Right ventricle myocardium inferior (tissue), 1 donor: ENCODE measurements at regions of chr19 and their contacts with region 1.

Region 1: DNA sequence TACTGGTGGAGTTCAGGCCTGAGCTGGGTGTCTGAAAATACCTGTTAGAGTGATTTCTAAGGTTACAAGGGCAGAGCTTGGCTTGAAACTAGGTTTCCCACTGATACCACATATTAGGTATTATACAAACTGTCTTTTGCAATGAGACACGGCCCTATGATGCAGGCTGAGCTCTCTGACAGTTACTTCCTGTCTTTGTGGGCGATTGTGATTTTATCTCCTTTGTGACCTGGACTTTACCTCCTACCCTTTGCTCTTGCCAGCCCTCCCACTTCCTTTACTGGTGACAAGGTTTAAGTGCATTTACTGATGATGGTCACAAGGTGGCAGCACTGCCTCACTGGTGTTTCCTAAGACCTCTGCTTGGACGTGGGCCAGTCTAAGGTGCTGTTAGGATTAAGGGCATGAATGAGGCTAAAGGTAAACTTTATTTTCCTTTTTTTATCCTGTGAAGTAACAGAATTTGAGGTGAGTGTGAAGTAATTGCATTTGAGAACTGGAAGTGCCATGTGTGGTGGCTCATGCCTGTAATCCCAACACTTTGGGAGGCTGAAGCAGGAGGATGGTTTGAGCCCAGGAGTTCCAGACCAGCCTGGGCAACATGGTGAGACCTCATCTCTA is 7.7 kb upstream of the CXCL17 start:
- DNase-seq: peak; percentile 85
- ATAC-seq: peak; percentile 73

Region 2: DNA sequence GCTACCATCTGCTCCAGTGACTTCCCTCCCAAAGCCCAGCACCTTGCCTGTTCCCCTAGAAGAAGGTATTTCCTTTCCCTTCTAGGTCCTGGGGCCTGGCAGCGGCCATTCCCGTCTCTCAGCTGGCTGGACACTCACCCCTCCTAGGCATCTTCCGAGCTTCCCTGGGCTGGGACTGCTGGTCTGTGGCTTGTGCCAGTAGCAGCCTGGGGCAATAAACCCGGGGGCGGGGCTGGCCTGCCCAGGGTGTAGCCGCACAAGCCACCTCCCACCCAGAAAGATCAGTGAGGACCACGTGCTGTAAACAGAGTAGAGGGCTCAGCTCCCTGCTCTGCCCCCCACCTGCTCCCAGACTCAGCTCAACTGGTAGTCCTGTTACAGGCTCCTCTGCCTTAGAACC is 38.2 kb before region 1 on chr19:
- intact Hi-C with region 1: no loop called
- DNase-seq: no peak
- ATAC-seq: peak; percentile 18

Region 3: DNA sequence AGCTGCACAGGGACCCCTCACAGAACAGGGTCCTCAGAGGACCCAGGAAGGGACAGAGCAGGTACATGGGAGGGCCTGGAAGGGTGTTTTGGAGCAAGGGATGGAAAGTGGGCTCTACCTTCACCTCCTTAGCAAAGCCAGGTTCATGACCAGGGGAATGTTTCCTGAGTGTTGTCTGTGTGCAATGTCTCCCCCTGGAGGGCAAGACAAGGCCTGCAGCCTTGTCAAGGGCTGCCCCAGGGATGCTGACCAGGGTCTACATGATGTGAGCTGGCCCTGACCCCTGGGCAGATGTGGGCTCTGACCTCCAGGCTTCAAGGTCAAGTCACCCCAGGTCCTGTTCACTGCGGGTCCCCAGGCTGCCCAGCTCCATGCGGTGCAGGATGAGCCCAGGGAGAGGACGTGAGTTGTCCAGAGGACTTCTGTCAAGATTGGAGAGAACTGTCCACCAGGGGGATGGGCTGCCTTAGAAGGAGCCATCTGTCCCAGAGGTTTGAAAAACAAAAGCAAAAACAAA is 78.9 kb after region 1 on chr19:
- intact Hi-C with region 1: loop called (anchors 1 kb)
- DNase-seq: no peak
- ATAC-seq: peak; percentile 46

Region 4: DNA sequence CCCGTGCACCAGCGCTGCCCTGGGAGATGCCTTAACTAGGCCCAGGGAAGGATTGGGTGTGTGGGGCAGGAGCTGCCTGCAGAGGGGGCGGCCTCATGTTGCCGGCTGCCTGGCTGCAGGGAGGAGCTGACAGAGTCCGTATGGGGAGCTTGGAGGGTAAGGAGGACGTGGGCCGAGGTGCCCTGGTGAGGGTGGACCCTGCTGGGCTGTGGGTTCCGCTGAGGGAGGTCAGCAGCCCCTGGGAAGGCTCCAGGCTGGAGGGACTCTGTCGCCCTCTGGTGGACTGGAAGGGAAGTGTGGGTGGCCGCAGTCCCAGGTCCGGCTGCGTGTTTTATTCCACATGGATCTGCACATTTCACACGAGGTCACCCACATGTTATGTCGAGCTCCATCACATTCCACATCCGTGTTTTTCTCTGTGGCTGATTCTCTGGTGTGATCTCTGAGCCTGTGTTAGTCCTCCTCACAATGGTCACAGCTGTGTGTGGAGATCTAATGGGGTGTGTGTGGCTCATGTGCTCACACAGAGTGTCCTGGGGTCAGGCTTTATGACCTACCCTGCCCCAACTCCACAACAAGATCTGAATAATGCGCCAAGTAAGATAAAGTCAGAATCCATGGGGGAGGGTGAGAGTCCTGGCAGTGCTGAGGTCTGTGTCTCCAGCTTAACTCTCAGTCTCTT is 146.1 kb after region 1 on chr19:
- intact Hi-C with region 1: loop called (anchors 2 kb)
- DNase-seq: no peak
- ATAC-seq: no peak